HCT116 (cell line): ENCODE measurements at regions of chr20 and their contacts with region 1.

Region 1: DNA sequence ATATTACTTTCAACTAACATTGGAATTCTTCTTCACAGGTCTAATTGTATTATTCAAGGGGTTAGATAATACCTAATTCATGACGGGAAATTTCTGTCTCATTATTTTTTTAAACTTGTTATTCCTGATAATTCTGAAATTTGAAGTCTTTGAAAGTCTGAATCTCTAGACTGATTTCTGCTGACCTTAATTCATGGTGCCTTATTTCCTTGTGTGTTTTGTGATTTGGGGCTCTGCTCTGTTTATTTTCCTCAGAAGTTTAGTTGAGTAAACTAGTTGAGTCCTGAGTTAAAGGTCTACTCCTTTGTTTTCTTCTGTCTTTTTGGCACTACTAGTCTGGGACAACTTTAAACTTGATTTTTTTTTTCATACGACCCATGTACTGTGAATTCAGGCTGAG is 5.9 kb downstream of the DEFB118 start:
- DNase-seq: no peak
- ATAC-seq: no peak
- H3K4me3 ChIP-seq: no peak overlapping the region
- H3K27ac ChIP-seq: no peak overlapping the region
- H3K4me1 ChIP-seq: no peaks in the 10 kb centered on the region
- H3K27me3 ChIP-seq: peaks cover 43% of the 10 kb centered on the region
- CTCF ChIP-seq: no peak
- POLR2A ChIP-seq: no peak
- RAD21 ChIP-seq: no peak

Region 2: GRCh38 chr20:31322504-31322903 is 51.8 kb before region 1 on chr20:
- CTCF ChIA-PET with region 1: no interaction called
- POLR2A ChIA-PET with region 1: no interaction called
- RAD21 ChIA-PET with region 1: no interaction called
- intact Hi-C with region 1: loop called (anchors 10 kb)
- DNase-seq: no peak
- ATAC-seq: no peak
- H3K4me3 ChIP-seq: no peak overlapping the region
- H3K27ac ChIP-seq: no peak overlapping the region
- H3K4me1 ChIP-seq: no peaks in the 10 kb centered on the region
- H3K27me3 ChIP-seq: peaks cover 10% of the 10 kb centered on the region; the same call in 1 of the 2 replicates
- CTCF ChIP-seq: no peak
- POLR2A ChIP-seq: no peak
- RAD21 ChIP-seq: no peak